Right cardiac atrium (tissue), 5 donors: ENCODE measurements at regions of chr4 and their contacts with region 1.

Region 1: DNA sequence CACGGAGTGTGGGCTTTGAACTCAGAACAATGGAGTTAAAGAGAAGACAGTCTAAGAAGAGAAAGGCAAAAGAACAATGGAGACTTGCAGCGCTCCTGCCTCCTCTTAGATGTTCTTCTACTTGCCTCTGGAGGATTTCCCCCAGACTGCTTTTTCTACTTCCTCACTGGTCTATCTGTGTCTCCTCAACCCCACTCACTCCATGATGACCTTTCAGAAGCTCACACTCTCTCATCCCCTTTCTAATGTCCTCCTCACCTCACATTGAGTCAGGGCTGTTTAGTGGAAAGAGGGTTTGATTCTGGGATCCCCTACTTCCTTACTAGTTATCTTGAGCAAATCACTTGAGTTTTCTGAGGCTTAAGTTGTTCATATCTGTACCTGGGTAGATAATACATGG is 12.2 kb upstream of the HERC6 start:
- DNase-seq: no peak
- ATAC-seq: no peak
- H3K4me3 ChIP-seq: no peak overlapping the region
- H3K27ac ChIP-seq: no peak overlapping the region
- H3K4me1 ChIP-seq: no peaks in the 10 kb centered on the region
- H3K27me3 ChIP-seq: no peaks in the 10 kb centered on the region

Region 2: GRCh38 chr4:88217920-88218319 is 148.5 kb before region 1 on chr4:
- intact Hi-C with region 1: loop called in 1 of 4 experiments (anchors 2 kb)
- DNase-seq: no peak
- ATAC-seq: no peak
- H3K4me3 ChIP-seq: no peak overlapping the region
- H3K27ac ChIP-seq: no peak overlapping the region
- H3K4me1 ChIP-seq: no peaks in the 10 kb centered on the region
- H3K27me3 ChIP-seq: no peaks in the 10 kb centered on the region

Region 3: GRCh38 chr4:88284439-88285234 is 81.8 kb before region 1 on chr4 and contains the start of gene PPM1K:
- intact Hi-C with region 1: loop called in 3 of 4 experiments (anchors 5 to 10 kb)
- DNase-seq: peak; percentile 100
- ATAC-seq: peak; percentile 99
- H3K4me3 ChIP-seq: peak within 1 kb of the TSS; percentile 77
- H3K27ac ChIP-seq: peak within 1 kb of the TSS; percentile 96
- H3K4me1 ChIP-seq: peaks cover 2% of the 10 kb centered on the region
- H3K27me3 ChIP-seq: no peaks in the 10 kb centered on the region
- total RNA-seq, gene PPM1K: 74.6 to 109 (median 91.3) TPM